Transverse colon (tissue), 4 donors: ENCODE measurements at regions of chr18 and their contacts with region 1.

Region 1: GRCh38 chr18:3454365-3455089 is 4.6 kb downstream of the TGIF1 start:
- DNase-seq: peak; percentile 39
- H3K4me3 ChIP-seq: peak overlapping the region; percentile 5 to 87 (median 76)
- H3K27ac ChIP-seq: peak overlapping the region; percentile 98 to 99 (median 99)
- H3K4me1 ChIP-seq: peaks cover 32 to 63% (median 46%) of the 10 kb centered on the region in 4 donors
- H3K27me3 ChIP-seq: no peaks in the 10 kb centered on the region
- CTCF ChIP-seq: peak; percentile 54 to 83 (median 66)
- EP300 ChIP-seq: no peak
- POLR2A ChIP-seq: no peak

Region 2: DNA sequence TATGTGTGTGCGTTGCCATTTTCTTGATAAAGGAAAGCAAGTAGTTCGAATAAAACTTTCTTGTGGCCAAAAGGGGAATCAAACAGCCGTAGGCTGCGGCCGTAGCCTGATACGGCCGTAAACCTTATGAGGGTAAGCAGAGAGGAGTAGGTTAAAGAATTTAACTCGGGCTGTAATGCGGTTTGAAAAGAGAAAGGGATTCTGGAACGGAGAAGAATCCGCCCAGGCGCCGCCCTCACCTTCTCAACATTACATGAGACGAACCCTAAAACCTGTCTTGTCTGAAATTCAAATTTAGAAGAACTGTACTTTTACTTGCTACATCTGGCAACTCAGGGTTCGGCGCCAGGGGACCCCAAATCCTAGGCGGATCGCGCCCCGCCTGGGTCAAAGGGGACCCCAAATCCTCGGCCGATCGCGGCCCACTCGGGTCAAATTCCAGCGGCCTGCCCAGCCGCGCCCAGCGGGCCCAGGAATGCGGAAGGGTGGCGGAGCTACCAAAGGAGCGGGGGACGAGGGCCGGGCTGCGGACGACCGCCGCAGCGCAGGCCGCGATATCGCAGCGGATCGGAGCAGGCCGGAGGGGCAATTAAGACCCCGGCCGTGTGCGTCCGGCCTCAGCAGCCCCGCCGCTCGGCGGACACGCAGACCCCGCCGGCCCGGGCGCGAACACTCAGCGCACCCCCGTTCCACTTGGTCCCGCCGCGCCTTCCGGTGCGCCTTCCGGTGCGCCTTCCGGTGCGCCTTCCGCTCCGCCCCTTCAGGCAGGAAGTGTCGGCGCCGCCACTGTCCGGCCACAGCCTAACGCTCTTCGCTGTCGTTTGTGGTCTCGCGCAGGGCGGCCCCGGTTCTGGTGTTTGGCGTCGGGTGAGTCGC is 192.9 kb before region 1 on chr18 and contains the start of gene MYL12B:
- in situ Hi-C with region 1: no loop called
- intact Hi-C with region 1: no loop called
- DNase-seq: peak; percentile 89
- H3K4me3 ChIP-seq: peak within 1 kb of the TSS; percentile 84 to 96 (median 91)
- H3K27ac ChIP-seq: peak within 1 kb of the TSS; percentile 92 to 99 (median 97)
- H3K4me1 ChIP-seq: peaks cover 27 to 61% (median 47%) of the 10 kb centered on the region in 4 donors
- H3K27me3 ChIP-seq: no peaks in the 10 kb centered on the region
- CTCF ChIP-seq: peak in 2 of 5 experiments; percentile 22 to 28
- EP300 ChIP-seq: no peak
- POLR2A ChIP-seq: peak; percentile 88
- total RNA-seq, gene MYL12B: 78.2 to 558 (median 337) TPM

Region 3: GRCh38 chr18:3585656-3586509 is 131.4 kb after region 1 on chr18:
- in situ Hi-C with region 1: loop called in 3 of 4 experiments (anchors 5 to 25 kb)
- intact Hi-C with region 1: no loop called
- DNase-seq: peak; percentile 90
- H3K4me3 ChIP-seq: no peak overlapping the region
- H3K27ac ChIP-seq: peak overlapping the region in 1 of 4 donors; percentile 14
- H3K4me1 ChIP-seq: peaks cover 0 to 25% (median 8%) of the 10 kb centered on the region in 4 donors
- H3K27me3 ChIP-seq: no peaks in the 10 kb centered on the region
- CTCF ChIP-seq: peak; percentile 76 to 92 (median 79)
- EP300 ChIP-seq: no peak
- POLR2A ChIP-seq: no peak